CD8-positive, alpha-beta T cell (primary cell): ENCODE measurements at regions of chr2 and their contacts with region 1.

Region 1: GRCh38 chr2:219543601-219544358 is at the starts of genes CHPF and TMEM198:
- DNase-seq: peak; percentile 82 to 95 (median 90)
- ATAC-seq: peak; percentile 69
- H3K4me3 ChIP-seq: peak within 1 kb of the TSS; percentile 66 to 80
- H3K4me3 Mint-ChIP-seq: peak within 1 kb of the TSS; percentile 87
- H3K27ac ChIP-seq: peak within 1 kb of the TSS; percentile 61 to 73
- H3K27ac Mint-ChIP-seq: peak within 1 kb of the TSS; percentile 84
- H3K4me1 ChIP-seq: peaks cover 18% of the 10 kb centered on the region
- H3K4me1 Mint-ChIP-seq: peaks cover 25% of the 10 kb centered on the region
- H3K27me3 ChIP-seq: no peaks in the 10 kb centered on the region
- H3K27me3 Mint-ChIP-seq: peaks cover 12% of the 10 kb centered on the region
- CTCF ChIP-seq: no peak
- total RNA-seq, gene CHPF: 5.2 to 6.2 TPM
- total RNA-seq, gene TMEM198: 0.31 to 0.46 TPM

Region 2: DNA sequence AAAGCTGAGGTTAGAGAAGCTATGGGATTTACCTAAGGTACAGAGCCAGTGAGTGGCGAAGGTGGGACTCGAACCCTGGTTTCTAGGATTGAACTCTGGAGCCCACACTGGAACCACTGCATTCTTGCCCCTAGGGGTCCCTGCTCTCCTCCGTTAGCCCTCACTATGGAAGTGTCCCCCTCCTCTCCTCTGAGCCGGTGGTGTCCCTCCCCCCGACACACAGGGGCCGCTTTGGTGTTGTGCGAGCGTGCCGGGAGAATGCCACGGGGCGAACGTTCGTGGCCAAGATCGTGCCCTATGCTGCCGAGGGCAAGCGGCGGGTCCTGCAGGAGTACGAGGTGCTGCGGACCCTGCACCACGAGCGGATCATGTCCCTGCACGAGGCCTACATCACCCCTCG is 53.6 kb before region 1 on chr2:
- CTCF ChIA-PET with region 1: interaction called, 10 read pairs
- POLR2A ChIA-PET with region 1: no interaction called
- intact Hi-C with region 1: no loop called
- DNase-seq: no peak
- ATAC-seq: no peak
- H3K4me3 ChIP-seq: no peak overlapping the region
- H3K4me3 Mint-ChIP-seq: no peak overlapping the region
- H3K27ac ChIP-seq: no peak overlapping the region
- H3K27ac Mint-ChIP-seq: no peak overlapping the region
- H3K4me1 ChIP-seq: no peaks in the 10 kb centered on the region
- H3K4me1 Mint-ChIP-seq: peaks cover 1% of the 10 kb centered on the region
- H3K27me3 ChIP-seq: peaks cover 4 to 17% of the 10 kb centered on the region in 2 experiments
- H3K27me3 Mint-ChIP-seq: peaks cover 58% of the 10 kb centered on the region
- CTCF ChIP-seq: no peak

Region 3: DNA sequence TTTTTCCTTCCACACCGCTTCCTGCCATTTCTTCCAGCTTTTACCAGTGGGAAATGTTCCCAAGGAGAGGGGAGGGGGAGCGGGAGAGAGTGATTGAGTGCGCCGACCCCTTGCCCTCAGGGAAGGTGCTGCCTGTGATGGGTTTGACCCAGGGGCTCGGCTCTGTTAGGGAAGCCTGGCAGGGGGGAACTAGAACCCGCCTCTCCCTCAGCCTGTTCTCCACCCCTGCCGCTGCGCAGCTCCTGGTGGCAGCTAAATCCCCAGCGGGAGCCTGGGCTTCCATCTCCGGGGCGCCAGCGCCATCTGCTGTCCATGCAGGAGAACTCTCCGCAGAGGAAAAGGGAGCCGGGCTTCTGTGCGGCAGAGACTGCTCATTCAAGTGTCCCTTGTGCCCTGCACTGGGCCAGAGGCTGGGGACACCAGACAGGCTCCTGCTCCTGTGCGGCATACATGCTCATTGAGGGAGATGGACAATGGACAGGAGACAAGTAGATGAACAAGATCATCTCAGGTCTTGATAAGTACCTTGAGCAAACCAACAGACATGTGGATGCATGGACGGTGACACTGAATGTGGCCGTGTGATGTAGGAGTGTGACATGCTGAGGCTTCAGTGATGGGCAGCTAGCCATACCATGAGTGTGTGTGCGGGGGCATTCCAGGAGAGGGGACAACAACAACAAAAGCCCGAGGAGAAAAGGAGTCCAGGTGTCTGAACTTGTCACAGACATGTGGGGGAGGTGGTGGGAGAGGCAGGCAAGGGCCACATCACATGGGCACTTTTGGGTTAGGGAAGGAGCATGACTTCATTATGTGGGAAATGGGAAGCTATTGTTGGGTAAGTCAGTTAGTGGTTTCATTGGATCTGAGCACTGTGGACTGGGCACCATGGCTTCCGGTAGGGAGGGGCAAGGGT is 13.5 kb before region 1 on chr2:
- CTCF ChIA-PET with region 1: interaction called, 42 read pairs
- POLR2A ChIA-PET with region 1: no interaction called
- intact Hi-C with region 1: no loop called
- DNase-seq: peak; percentile 73 to 92 (median 85)
- ATAC-seq: peak; percentile 98
- H3K4me3 ChIP-seq: no peak overlapping the region
- H3K4me3 Mint-ChIP-seq: no peak overlapping the region
- H3K27ac ChIP-seq: no peak overlapping the region
- H3K27ac Mint-ChIP-seq: no peak overlapping the region
- H3K4me1 ChIP-seq: no peaks in the 10 kb centered on the region
- H3K4me1 Mint-ChIP-seq: peaks cover 3% of the 10 kb centered on the region
- H3K27me3 ChIP-seq: peaks cover 6 to 9% of the 10 kb centered on the region in 2 experiments
- H3K27me3 Mint-ChIP-seq: peaks cover 67% of the 10 kb centered on the region
- CTCF ChIP-seq: peak; percentile 98

Region 4: DNA sequence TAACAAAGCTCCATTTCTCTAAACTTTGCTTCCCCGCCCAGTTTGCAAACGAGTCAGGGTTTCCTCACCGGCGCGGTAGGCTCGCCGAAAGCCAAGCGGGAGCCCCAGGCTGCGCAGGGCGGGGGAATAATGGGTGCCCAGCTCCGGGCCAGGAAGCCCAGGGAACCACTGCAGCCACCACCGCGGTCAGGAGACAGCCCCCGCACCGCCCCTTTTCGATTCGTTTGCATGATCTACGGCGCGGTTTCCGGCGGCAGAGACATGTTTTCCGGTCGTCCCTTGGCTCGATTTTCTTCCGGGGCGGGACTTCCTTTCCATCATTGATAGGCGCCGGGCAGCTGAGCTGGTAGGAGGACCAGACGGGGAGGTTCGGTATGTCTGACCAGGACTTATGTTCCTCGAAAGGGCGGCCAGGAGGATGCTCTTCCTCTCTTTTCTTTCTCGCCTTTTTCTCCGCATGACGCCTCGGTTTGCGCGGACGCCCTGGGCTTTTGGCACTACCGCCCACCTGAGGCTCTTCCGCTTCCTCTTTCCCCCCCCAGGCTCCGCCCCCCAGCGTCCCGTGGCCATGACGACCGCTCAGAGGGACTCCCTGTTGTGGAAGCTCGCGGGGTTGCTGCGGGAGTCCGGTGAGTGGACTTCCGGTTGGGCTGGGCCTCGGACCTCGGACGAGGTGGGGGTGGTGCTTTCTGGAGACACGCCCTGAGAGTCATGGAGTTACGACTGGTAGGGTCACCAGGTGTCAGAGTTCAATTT is 54.0 kb after region 1 on chr2 and contains the start of gene STK11IP:
- CTCF ChIA-PET with region 1: interaction called, 12 read pairs
- POLR2A ChIA-PET with region 1: interaction called, 7 read pairs
- intact Hi-C with region 1: loop called (anchors 1 to 2 kb)
- DNase-seq: peak; percentile 74 to 95 (median 90)
- ATAC-seq: peak; percentile 84
- H3K4me3 ChIP-seq: peak within 1 kb of the TSS; percentile 79 to 90
- H3K4me3 Mint-ChIP-seq: peak within 1 kb of the TSS; percentile 97
- H3K27ac ChIP-seq: peak within 1 kb of the TSS; percentile 77 to 83
- H3K27ac Mint-ChIP-seq: peak within 1 kb of the TSS; percentile 97
- H3K4me1 ChIP-seq: peaks cover 9% of the 10 kb centered on the region
- H3K4me1 Mint-ChIP-seq: peaks cover 27% of the 10 kb centered on the region
- H3K27me3 ChIP-seq: no peaks in the 10 kb centered on the region
- H3K27me3 Mint-ChIP-seq: no peaks in the 10 kb centered on the region
- CTCF ChIP-seq: no peak
- total RNA-seq, gene STK11IP: 29.7 to 31.5 TPM

Region 5: DNA sequence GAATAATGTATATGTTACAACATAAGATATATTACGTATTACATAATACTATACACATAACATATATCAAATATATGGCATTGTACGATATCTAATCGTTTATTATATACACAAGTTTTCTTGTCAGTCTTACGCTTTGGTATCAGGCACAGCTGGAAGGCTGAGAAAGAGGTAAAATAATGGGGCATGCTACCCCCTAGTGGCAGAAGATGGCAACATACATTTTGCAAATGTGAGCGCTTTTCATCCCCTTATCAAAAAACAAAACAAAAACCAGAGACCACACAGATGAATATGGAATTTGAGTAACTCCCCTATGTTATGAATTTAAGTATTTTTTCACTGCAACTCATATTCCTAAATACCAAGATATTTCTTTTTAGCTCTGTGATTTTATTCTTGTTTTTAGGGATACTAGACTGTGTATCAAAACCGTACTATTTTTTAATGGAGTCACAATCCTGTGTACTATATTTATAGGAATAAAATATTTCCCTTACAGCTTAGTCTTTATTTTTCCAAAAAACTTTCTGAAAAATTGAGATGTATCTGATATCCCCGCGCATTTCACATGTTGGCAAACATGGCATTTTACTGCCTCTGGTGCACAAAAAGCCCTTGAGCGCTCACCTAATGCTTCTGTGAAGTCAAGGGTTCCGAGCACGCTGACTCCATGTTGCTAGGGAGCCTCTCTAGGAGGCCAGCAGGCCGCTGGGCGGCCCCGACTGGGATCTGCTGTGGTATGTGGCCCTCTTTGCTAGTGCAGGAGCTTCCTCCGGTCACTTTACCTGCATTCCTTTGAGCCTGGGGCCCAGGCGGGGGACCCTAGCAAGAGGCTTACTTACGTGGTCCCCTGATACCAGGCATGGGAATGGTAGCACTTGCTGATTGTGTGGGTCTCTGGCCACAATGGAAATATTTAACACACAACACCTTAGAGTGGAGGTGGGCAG is 146.2 kb after region 1 on chr2:
- CTCF ChIA-PET with region 1: interaction called, 4 read pairs
- POLR2A ChIA-PET with region 1: no interaction called
- intact Hi-C with region 1: loop called (anchors 2 kb)
- DNase-seq: peak in 5 of 9 experiments; percentile 13 to 59 (median 35)
- ATAC-seq: peak; percentile 43
- H3K4me3 ChIP-seq: no peak overlapping the region
- H3K4me3 Mint-ChIP-seq: no peak overlapping the region
- H3K27ac ChIP-seq: no peak overlapping the region
- H3K27ac Mint-ChIP-seq: no peak overlapping the region
- H3K4me1 ChIP-seq: no peaks in the 10 kb centered on the region
- H3K4me1 Mint-ChIP-seq: peaks cover 10% of the 10 kb centered on the region
- H3K27me3 ChIP-seq: peaks cover 0 to 5% of the 10 kb centered on the region in 2 experiments
- H3K27me3 Mint-ChIP-seq: peaks cover 34% of the 10 kb centered on the region
- CTCF ChIP-seq: peak; percentile 79